PC-9 (cell line): ENCODE measurements at regions of chr19 and their contacts with region 1.

Region 1: DNA sequence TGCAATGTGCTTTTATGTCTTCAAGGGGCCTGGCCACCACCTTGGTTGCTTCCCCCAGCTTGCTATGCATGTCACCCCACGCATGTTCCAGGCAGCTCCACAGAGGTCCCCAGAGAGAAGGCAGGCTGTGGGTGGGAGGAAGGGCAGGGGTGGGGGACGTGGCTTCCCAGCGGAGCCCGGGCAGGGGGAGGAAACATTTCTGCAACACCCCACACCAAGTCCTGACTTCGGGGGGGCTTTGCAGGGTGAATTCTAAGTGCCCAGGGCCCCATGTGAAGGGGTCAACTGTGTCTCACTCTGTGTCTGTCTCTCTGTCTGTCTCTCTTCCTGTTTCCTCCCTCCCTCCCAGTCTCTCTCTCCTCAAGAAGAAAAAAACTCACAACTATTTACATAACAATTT is 39.6 kb downstream of the LTBP4 start:
- DNase-seq: no peak
- H3K4me3 ChIP-seq: no peak overlapping the region
- H3K27ac ChIP-seq: no peak overlapping the region
- H3K4me1 ChIP-seq: peaks cover 12% of the 10 kb centered on the region
- H3K27me3 ChIP-seq: no peaks in the 10 kb centered on the region
- CTCF ChIP-seq: no peak

Region 2: GRCh38 chr19:40609561-40610395 is 31.0 kb before region 1 on chr19:
- CTCF ChIA-PET with region 1: no interaction called
- POLR2A ChIA-PET with region 1: interaction called, 28 read pairs
- intact Hi-C with region 1: no loop called
- DNase-seq: peak; percentile 77 to 95
- H3K4me3 ChIP-seq: peak overlapping the region; percentile 63
- H3K27ac ChIP-seq: no peak overlapping the region
- H3K4me1 ChIP-seq: peaks cover 18% of the 10 kb centered on the region
- H3K27me3 ChIP-seq: no peaks in the 10 kb centered on the region
- CTCF ChIP-seq: no peak

Region 3: DNA sequence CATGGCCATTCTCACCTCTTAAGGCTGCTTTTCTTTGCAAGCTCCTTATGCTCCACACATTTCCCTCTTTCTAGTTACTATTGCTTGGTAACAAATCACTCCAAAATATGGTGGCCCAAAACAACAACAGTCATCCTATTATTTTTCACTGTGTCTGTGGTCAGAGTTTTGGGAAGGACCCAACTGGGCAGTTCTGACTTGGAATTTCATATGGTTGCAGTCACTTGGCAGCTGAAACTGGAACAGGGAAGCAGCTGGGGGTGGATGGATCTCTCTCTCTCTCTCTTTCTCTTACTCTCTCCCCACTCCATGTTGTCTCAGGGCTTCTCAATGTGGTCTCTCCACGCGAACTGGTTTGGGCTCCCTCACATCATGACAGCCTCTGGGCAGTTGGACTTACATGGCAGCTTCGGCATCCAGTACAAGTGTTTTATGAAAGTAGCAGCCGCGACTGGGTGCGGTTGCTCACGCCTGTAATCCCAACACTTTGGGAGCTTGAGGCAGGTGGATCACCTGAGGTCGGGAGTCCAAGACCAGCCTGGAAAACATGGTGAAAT is 10.1 kb after region 1 on chr19:
- CTCF ChIA-PET with region 1: interaction called, 18 read pairs
- POLR2A ChIA-PET with region 1: no interaction called
- intact Hi-C with region 1: no loop called
- DNase-seq: no peak
- H3K4me3 ChIP-seq: no peak overlapping the region
- H3K27ac ChIP-seq: no peak overlapping the region
- H3K4me1 ChIP-seq: peaks cover 10% of the 10 kb centered on the region
- H3K27me3 ChIP-seq: no peaks in the 10 kb centered on the region
- CTCF ChIP-seq: no peak

Region 4: GRCh38 chr19:40674291-40674690 is 33.5 kb after region 1 on chr19:
- CTCF ChIA-PET with region 1: no interaction called
- POLR2A ChIA-PET with region 1: no interaction called
- intact Hi-C with region 1: no loop called
- DNase-seq: peak in 1 of 2 experiments; percentile 45
- H3K4me3 ChIP-seq: no peak overlapping the region
- H3K27ac ChIP-seq: no peak overlapping the region
- H3K4me1 ChIP-seq: no peaks in the 10 kb centered on the region
- H3K27me3 ChIP-seq: no peaks in the 10 kb centered on the region
- CTCF ChIP-seq: no peak